ENCODE measurements at regions of chr1 and their contacts with region 1.

Region 1: DNA sequence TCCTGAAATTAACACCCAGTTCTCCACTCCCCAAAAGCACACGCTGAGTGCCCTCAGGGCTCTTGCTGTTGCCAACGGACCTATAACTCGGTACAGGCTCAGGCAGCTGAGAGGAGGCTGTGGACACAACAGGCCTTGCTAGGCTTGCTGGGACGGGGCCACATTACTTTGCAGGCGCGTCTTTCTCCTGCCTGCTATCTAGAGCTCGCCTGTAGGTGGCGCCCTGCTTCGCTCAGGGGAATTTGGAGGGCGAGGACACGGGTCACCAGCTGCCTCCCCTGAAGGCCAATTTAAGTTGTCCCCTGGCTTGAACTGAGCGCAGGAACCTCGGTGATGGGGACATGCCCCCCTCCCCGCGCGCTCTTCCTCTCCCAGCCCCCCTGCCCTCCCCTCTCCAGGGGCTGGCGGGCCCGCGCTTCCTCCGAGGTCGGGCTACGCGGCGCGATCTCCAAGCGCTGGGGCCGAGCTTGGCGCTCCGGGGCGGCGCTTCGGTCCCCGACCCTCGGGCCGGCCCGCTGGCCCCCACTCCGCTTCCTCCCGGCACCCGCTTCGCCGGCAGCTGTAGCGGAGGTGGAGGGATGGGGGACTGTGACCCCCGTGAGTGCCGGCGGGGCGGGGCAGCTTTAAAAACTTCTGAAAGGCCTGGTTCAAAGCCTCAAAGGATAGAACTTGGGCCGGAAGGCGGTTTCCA is 32.4 kb upstream of the NFIA start:
- DNase-seq: peak; percentile 96
- H3K4me3 Mint-ChIP-seq: peak overlapping the region; percentile 76
- H3K27ac Mint-ChIP-seq: no peak overlapping the region
- H3K4me1 Mint-ChIP-seq: peaks cover 17% of the 10 kb centered on the region
- H3K27me3 Mint-ChIP-seq: peaks cover 57% of the 10 kb centered on the region

Region 2: GRCh38 chr1:61077676-61078541 is 27.9 kb after region 1 on chr1:
- intact Hi-C with region 1: loop called (anchors 1 kb)
- DNase-seq: peak; percentile 96
- H3K4me3 Mint-ChIP-seq: peak overlapping the region; percentile 92
- H3K27ac Mint-ChIP-seq: peak overlapping the region; percentile 86
- H3K4me1 Mint-ChIP-seq: peaks cover 39% of the 10 kb centered on the region
- H3K27me3 Mint-ChIP-seq: peaks cover 50% of the 10 kb centered on the region

Region 3: DNA sequence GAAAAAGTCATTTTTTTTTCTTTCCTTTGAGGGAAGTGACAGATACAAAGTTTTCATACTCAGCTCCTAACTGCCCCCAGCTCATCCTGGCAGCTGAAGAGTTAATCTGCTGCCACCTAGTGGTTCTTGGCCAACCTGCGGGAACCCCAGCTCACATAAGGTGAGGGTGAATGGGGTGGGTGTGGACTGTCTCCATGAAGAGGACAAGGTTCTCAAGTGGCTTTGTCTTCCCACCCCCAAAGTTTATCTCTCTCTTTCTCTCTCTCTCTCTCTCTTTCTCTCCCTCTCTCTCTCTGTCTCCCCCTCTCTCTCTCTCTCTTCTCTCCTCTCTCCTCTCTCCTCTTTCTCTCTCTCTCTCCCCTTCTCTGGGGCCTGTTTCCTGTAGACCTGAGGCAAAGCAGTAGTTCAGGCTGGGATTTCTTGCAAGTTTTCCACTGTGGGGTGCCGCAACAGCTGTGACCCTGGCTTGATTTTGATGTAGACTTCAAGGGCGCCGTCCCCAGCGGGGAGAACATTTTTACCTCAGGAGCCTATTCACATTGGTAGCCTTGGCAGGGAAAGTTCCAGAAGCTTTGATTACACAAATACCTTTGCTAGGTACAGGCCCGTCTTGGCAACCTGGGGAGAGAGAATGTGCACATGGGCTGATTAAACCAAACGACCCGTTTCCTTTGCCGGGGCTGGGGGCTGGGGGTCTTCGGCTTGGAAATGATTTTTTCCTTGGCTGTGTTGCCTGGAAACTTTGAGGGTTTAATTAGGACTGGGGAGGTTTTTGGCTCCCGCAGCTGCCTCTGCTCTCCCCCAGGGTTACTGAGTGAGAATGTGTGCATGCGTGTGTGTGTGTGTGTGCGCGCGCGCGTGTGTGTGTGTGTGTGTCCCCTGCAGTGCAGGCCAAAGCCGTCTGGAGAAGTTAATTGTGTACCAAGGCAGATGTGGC is 539.0 kb after region 1 on chr1:
- intact Hi-C with region 1: loop called (anchors 2 kb)
- DNase-seq: peak; percentile 88
- H3K4me3 Mint-ChIP-seq: no peak overlapping the region
- H3K27ac Mint-ChIP-seq: no peak overlapping the region
- H3K4me1 Mint-ChIP-seq: no peaks in the 10 kb centered on the region
- H3K27me3 Mint-ChIP-seq: peaks cover 22% of the 10 kb centered on the region

Measured in activated CD4-positive, alpha-beta T cell treated with anti-CD3 and anti-CD28 coated beads, Interleukin-2, amount 10 ng/mL, durations not matched to agents 24 days and 14 days (primary cell).